ENCODE measurements at regions of chr10 and their contacts with region 1.

Region 1: GRCh38 chr10:63157845-63158624 is 24.9 kb downstream of the NRBF2 start:
- DNase-seq: no peak
- ATAC-seq: peak; percentile 81
- H3K4me3 ChIP-seq: no peak overlapping the region
- H3K27ac ChIP-seq: no peak overlapping the region
- H3K4me1 ChIP-seq: no peaks in the 10 kb centered on the region
- H3K27me3 ChIP-seq: no peaks in the 10 kb centered on the region

Region 2: DNA sequence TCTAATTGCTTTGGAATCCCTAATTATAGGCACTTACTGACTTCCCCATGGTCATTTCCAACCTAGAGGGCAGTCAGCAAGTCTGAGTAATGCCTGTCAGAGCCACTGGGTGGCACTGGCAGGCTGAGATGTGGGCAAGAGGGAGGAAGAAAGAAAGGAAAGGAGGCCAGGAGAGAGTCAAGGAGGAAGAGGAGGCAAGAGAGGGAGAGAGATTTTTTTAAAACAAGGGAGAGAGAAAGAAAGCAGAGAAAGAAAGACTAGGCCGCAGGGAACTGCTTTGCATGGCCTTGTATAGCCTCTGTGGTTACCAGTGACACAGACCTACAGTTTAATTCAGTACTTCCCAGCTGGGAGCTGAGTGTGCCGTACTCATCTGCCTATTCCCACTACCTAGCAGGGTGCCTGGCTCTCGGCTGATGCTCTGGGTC is 563.9 kb before region 1 on chr10:
- intact Hi-C with region 1: loop called (anchors 2 to 5 kb)
- DNase-seq: peak; percentile 61 to 81
- ATAC-seq: peak; percentile 82
- H3K4me3 ChIP-seq: no peak overlapping the region
- H3K27ac ChIP-seq: no peak overlapping the region
- H3K4me1 ChIP-seq: no peaks in the 10 kb centered on the region
- H3K27me3 ChIP-seq: no peaks in the 10 kb centered on the region

Region 3: DNA sequence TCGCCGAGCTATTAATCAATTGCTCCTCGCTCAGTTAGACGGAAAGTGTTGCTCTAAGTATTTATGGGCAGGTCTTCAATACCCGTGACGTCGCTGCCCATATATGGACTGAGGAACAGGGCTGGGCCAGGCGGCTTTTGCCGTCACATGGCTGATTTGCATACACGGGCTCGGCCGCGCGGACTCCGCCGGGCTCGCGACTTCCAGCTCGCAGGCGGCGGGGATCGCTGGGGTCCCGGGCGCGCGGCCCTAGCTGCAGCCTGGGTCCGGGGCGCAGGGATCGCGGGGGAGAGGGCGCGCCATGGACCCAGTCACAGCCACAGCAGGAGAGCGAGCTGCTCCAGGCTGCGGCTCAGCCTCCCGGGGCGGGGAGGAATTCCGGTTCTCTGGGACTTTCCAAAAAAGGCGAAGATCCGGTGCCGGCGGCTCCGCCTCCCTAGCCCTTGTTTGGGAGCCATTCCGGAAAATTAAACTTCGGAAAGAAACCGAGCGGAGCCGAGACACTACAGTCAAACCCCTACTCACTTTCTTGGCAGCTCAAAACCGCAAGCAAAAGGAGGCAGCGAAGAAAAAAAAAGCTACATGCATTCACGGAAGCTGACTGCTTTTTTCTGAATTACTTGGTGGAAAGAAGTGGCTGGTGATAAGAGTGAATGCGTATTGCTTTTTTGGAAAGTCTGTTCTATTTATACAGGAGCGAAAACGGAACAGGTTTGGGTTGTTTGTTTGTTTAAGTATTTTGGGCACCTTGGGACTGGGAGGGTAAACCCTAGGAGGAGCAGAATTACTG is 341.5 kb before region 1 on chr10 and contains the start of gene EGR2:
- intact Hi-C with region 1: loop called (anchors 5 to 10 kb)
- DNase-seq: peak; percentile 96 to 97
- ATAC-seq: peak; percentile 92
- H3K4me3 ChIP-seq: peak within 1 kb of the TSS; percentile 51 to 74
- H3K27ac ChIP-seq: peak within 1 kb of the TSS; percentile 50 to 66
- H3K4me1 ChIP-seq: no peaks in the 10 kb centered on the region
- H3K27me3 ChIP-seq: no peaks in the 10 kb centered on the region
- total RNA-seq, gene EGR2: 11.4 to 23.0 TPM

Region 4: DNA sequence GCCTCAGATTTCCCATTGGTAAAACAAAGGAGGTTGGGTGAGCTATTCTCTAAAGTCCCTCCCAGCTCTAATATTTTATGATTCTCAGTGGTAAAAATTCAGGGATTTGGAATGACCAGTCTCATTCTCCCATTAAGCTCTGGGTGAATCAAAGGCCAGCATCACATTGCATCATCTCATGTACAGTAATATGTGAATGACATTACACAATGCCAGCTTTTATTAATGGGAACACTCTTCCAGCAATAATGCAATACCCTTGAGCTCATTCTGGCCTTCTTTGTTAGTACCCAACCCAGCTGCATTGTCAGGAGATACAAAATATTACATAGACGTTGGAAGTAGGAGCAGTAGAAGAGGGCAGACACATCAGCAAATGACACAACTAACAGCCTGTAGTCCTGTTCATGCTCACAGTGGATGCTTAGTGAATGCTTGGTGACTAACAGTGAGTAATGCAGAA is 241.9 kb before region 1 on chr10:
- intact Hi-C with region 1: no loop called
- DNase-seq: no peak
- ATAC-seq: peak; percentile 37
- H3K4me3 ChIP-seq: no peak overlapping the region
- H3K27ac ChIP-seq: no peak overlapping the region
- H3K4me1 ChIP-seq: peaks cover 0 to 5% of the 10 kb centered on the region in 2 donors
- H3K27me3 ChIP-seq: no peaks in the 10 kb centered on the region

Region 5: GRCh38 chr10:63083904-63084689 is 73.9 kb before region 1 on chr10:
- intact Hi-C with region 1: loop called in 1 of 2 experiments (anchors 10 kb)
- DNase-seq: peak; percentile 73
- ATAC-seq: peak; percentile 84
- H3K4me3 ChIP-seq: no peak overlapping the region
- H3K27ac ChIP-seq: no peak overlapping the region
- H3K4me1 ChIP-seq: no peaks in the 10 kb centered on the region
- H3K27me3 ChIP-seq: no peaks in the 10 kb centered on the region

Measured in aorta (tissue), 5 donors.